ENCODE measurements at regions of chr17 and their contacts with region 1.

Region 1: DNA sequence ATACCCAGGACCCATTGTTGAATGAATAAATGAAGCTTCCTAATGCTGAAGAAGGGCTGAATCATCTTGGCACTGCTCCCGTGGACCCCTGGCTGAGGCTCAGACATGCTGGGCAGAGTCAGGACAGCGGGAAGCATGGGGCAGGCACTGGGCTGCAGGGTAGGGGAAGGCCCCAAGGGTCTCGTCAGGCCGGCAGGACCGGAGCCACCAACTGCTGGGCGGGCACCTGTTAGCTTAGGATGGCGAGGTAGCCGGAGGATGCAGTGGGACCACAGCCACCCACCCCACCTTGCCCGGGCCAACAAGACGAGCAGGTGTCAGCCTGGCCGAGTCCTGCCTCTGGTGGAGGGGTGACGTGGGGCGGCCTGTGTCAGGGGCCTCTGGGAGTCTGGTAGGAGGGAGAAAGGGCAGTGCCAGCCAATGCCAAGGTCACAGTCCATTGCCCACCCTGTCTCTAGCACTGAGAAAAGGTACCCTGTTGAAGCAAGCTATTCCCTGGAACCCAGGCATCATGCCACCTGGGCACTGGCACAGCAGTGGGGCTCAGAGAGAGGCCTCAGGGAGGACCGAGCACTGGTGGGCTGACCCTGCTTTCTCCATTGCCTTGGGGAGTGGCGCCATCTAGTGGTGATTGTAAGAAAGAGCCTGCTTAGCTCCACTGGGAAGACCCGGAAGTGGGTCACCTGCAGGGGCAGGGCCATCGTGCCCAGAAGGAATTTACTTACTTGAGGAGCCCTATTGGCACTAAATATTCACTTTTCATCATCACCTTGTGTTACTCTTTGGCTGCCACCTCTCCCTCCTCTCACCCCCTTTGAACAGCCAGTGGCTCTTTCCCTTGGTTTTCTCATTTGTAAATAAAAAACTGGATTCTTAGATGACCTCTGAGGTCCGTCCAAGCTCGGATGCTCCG is 3.0 kb upstream of the DLX3 start:
- DNase-seq: peak; percentile 74
- H3K4me3 ChIP-seq: no peak overlapping the region
- H3K27ac ChIP-seq: no peak overlapping the region
- H3K4me1 ChIP-seq: no peaks in the 10 kb centered on the region
- H3K27me3 ChIP-seq: peaks cover 41 to 53% of the 10 kb centered on the region in 2 experiments
- CTCF ChIP-seq: peak; percentile 83 to 87
- POLR2A ChIP-seq: no peak

Region 2: GRCh38 chr17:49707608-49708514 is 290.2 kb before region 1 on chr17 and contains the start of gene SLC35B1:
- CTCF ChIA-PET with region 1: interaction called, 21 read pairs
- POLR2A ChIA-PET with region 1: no interaction called
- dilution Hi-C with region 1: no loop called
- intact Hi-C with region 1: loop called (anchors 1 kb)
- DNase-seq: peak; percentile 100
- H3K4me3 ChIP-seq: peak within 1 kb of the TSS; percentile 84 to 93 (median 84)
- H3K27ac ChIP-seq: peak within 1 kb of the TSS; percentile 97
- H3K4me1 ChIP-seq: peaks cover 33% of the 10 kb centered on the region
- H3K27me3 ChIP-seq: no peaks in the 10 kb centered on the region
- CTCF ChIP-seq: peak; percentile 86 to 91
- POLR2A ChIP-seq: peak; percentile 66
- total RNA-seq, gene SLC35B1: 87.0 and 96.7 TPM in 2 replicates

Region 3: GRCh38 chr17:49861150-49861892 is 136.7 kb before region 1 on chr17:
- CTCF ChIA-PET with region 1: interaction called, 590 read pairs
- POLR2A ChIA-PET with region 1: interaction called, 6 read pairs
- dilution Hi-C with region 1: no loop called
- intact Hi-C with region 1: loop called (anchors 1 kb)
- DNase-seq: peak; percentile 30
- H3K4me3 ChIP-seq: no peak overlapping the region
- H3K27ac ChIP-seq: no peak overlapping the region
- H3K4me1 ChIP-seq: no peaks in the 10 kb centered on the region
- H3K27me3 ChIP-seq: peaks cover 3% of the 10 kb centered on the region in 2 experiments
- CTCF ChIP-seq: peak; percentile 57 to 78
- POLR2A ChIP-seq: no peak

Region 4: DNA sequence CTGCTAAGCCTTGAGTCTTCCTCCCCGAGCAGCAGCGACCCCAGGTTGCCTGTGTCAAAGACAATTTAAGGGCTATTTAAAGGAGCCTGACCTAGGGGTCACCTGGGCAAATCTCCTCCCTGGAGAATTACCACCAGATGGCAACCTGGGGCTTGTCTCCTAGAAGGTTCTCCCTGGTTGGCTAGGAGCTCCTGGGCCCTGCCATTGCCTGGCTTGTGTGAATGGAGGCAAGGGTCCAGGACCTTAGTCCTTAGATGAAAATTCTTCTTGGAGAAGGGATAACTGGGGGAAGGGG is 98.9 kb before region 1 on chr17:
- CTCF ChIA-PET with region 1: interaction called, 89 read pairs
- POLR2A ChIA-PET with region 1: no interaction called
- dilution Hi-C with region 1: no loop called
- intact Hi-C with region 1: loop called (anchors 1 kb)
- DNase-seq: peak; percentile 9
- H3K4me3 ChIP-seq: no peak overlapping the region
- H3K27ac ChIP-seq: no peak overlapping the region
- H3K4me1 ChIP-seq: no peaks in the 10 kb centered on the region
- H3K27me3 ChIP-seq: peaks cover 41 to 50% of the 10 kb centered on the region in 2 experiments
- CTCF ChIP-seq: peak in 1 of 2 donors; percentile 28
- POLR2A ChIP-seq: no peak

Region 5: DNA sequence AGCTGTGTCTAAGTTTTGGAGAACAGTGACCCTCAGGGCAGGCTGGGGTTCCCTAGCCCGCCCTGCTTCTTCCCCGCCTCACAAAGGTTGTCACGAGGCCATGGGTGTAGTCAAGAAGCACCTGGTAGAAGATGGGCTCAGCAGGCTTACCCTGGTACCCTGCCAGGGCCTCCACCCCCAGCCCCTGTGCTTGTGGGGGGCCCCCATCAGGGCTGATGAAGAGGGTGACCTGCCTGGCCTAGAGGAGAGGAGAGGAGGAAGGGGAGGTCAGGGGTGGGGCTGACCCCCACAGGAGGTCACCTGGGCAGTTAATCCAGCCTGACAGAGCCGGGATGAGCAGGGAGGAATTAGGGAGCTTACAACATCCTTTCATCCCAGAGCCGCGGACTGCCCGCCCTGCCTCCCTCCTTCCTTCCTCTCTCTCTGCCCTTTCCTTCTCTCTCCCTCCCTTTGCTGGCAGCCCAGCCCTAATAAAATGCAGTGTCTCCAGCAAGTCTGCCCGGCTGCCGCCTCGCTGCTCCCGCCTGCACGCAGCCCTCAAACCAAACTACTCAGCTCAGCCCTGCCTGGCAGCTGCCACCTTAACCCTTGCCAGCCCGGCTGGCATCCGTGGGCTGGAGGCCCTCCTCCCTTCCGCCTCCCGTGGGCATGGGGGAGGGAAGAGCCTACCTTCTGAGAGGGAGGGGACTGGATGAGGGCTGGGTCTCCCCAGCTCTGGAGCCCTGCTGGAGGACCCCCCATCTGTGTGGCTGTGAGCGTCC is 10.2 kb before region 1 on chr17:
- CTCF ChIA-PET with region 1: interaction called, 63 read pairs
- POLR2A ChIA-PET with region 1: no interaction called
- dilution Hi-C with region 1: no loop called
- intact Hi-C with region 1: no loop called
- DNase-seq: no peak
- H3K4me3 ChIP-seq: no peak overlapping the region
- H3K27ac ChIP-seq: no peak overlapping the region
- H3K4me1 ChIP-seq: no peaks in the 10 kb centered on the region
- H3K27me3 ChIP-seq: peaks cover 30 to 46% of the 10 kb centered on the region in 2 experiments
- CTCF ChIP-seq: no peak
- POLR2A ChIP-seq: no peak

Region 6: DNA sequence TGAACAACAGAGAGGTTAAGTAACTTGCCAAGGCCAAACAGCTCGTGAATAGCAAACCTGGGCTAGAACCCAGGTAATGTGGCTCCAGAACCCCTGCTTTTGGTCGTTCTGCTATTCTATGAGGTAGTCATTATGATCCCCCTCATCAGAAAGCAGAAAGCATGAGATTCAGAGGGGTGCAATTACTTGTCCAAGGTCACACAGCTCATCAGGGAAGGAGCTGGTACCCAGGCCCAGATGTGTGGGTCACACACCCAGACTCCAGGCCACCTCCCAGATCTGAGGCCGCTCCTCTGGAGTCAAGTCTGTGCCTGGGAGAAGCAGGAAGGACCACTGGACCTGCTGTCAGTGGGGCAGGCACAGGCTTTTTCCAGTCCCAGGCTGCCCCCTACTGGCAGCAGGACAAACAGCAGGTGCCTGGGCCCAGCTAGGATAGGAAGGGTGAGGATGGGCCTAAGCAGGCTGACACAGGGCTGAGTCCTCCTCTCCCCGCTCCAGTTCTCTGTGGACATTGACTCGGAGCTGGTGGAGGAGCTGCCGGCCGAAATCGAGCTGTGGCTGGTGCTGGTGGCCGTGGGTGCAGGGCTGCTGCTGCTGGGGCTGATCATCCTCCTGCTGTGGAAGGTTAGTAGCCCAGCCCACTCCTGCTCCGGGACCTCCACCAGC is 89.3 kb after region 1 on chr17:
- CTCF ChIA-PET with region 1: interaction called, 25 read pairs
- POLR2A ChIA-PET with region 1: no interaction called
- dilution Hi-C with region 1: no loop called
- intact Hi-C with region 1: loop called (anchors 1 kb)
- DNase-seq: peak; percentile 64
- H3K4me3 ChIP-seq: no peak overlapping the region
- H3K27ac ChIP-seq: no peak overlapping the region
- H3K4me1 ChIP-seq: no peaks in the 10 kb centered on the region
- H3K27me3 ChIP-seq: no peaks in the 10 kb centered on the region
- CTCF ChIP-seq: peak; percentile 96
- POLR2A ChIP-seq: no peak

Measured in endothelial cell of umbilical vein (primary cell).